ENCODE measurements at regions of chr5 and their contacts with region 1.

Region 1: GRCh38 chr5:173925448-173926071 is 37.4 kb downstream of the CPEB4 start:
- DNase-seq: peak; percentile 51
- H3K4me3 Mint-ChIP-seq: no peak overlapping the region
- H3K27ac Mint-ChIP-seq: no peak overlapping the region
- H3K4me1 Mint-ChIP-seq: no peaks in the 10 kb centered on the region
- H3K27me3 Mint-ChIP-seq: no peaks in the 10 kb centered on the region

Region 2: DNA sequence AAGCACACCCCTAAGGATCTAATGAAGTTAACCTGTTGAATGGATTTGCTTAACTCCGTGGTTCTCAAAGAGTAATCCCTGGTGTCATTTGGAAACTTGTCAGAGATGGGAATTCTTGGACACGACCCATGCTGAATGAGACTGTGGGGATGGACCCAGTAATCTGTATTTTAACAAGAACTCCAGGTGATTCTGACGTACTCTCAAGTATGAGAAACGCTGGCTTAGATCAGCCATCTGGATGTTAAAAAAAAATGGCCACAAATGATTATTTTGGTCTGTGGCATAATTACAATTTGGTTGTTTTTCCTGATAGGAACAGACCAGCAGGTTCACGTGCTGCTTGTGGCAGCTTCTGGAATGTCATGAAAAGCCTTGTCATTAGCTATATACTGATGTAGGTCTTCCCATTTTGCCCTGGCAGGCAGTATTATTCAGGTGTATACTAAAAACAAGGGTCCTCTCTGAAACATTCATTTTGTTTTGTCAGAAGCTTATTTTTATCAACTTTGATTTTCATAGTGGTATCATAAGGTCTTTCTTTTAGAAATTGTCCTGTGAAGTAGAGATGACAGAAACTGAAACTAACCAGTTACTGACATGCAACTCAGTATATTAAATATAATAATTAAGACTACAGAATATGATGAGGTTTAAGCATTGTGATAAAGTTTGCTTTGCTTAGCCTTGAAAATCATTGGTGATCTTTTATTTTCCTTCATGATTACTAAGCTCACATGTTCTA is 22.0 kb before region 1 on chr5:
- CTCF ChIA-PET with region 1: interaction called, 13 read pairs
- POLR2A ChIA-PET with region 1: no interaction called
- DNase-seq: no peak
- H3K4me3 Mint-ChIP-seq: no peak overlapping the region
- H3K27ac Mint-ChIP-seq: no peak overlapping the region
- H3K4me1 Mint-ChIP-seq: peaks cover 1% of the 10 kb centered on the region
- H3K27me3 Mint-ChIP-seq: no peaks in the 10 kb centered on the region

Measured in activated CD4-positive, alpha-beta memory T cell treated with anti-CD3 and anti-CD28 coated beads, Interleukin-2, amount 10 ng/mL, durations not matched to agents 7 days and 5 days (primary cell).